Naive thymus-derived CD4-positive, alpha-beta T cell (primary cell): ENCODE measurements at regions of chr6 and their contacts with region 1.

Region 1: DNA sequence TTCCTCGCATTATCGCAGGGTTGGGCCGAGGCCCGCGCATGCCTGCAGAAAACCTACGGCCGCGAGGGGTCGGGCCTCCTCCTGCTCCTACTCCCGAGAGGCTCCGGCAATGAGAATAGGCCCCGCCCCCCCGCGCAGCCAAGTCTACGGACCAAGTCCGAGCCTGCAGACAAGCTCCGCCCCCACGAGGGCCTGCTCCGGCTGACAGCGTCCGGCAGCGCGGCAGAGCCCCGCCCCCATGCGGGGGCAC is 3.1 kb upstream of the GPSM3 start:
- DNase-seq: peak; percentile 94 to 100 (median 98)
- ATAC-seq: peak; percentile 89
- H3K4me3 ChIP-seq: peak overlapping the region; percentile 98
- H3K4me3 Mint-ChIP-seq: peak overlapping the region; percentile 92 to 99 (median 97)
- H3K27ac ChIP-seq: peak overlapping the region; percentile 97
- H3K27ac Mint-ChIP-seq: peak overlapping the region; percentile 86 to 99 (median 97)
- H3K4me1 ChIP-seq: peaks cover 20 to 29% of the 10 kb centered on the region in 2 donors
- H3K4me1 Mint-ChIP-seq: peaks cover 24 to 40% (median 31%) of the 10 kb centered on the region in 7 donors
- H3K27me3 ChIP-seq: no peaks in the 10 kb centered on the region
- H3K27me3 Mint-ChIP-seq: no peaks in the 10 kb centered on the region

Region 2: GRCh38 chr6:31493875-31494694 is 701.5 kb before region 1 on chr6:
- CTCF ChIA-PET with region 1: no interaction called
- POLR2A ChIA-PET with region 1: no interaction called
- intact Hi-C with region 1: loop called in 1 of 2 experiments (anchors 10 kb)
- DNase-seq: peak; percentile 33 to 78 (median 62)
- ATAC-seq: peak; percentile 65
- H3K4me3 ChIP-seq: peak overlapping the region; percentile 87
- H3K4me3 Mint-ChIP-seq: peak overlapping the region; percentile 78 to 93 (median 88)
- H3K27ac ChIP-seq: peak overlapping the region; percentile 81
- H3K27ac Mint-ChIP-seq: peak overlapping the region; percentile 36 to 98 (median 87)
- H3K4me1 ChIP-seq: peaks cover 17 to 24% of the 10 kb centered on the region in 2 donors
- H3K4me1 Mint-ChIP-seq: peaks cover 41 to 61% (median 50%) of the 10 kb centered on the region in 7 donors
- H3K27me3 ChIP-seq: no peaks in the 10 kb centered on the region
- H3K27me3 Mint-ChIP-seq: no peaks in the 10 kb centered on the region

Region 3: GRCh38 chr6:31513456-31514165 is 682.0 kb before region 1 on chr6:
- CTCF ChIA-PET with region 1: no interaction called
- POLR2A ChIA-PET with region 1: no interaction called
- intact Hi-C with region 1: no loop called
- DNase-seq: no peak
- ATAC-seq: no peak
- H3K4me3 ChIP-seq: no peak overlapping the region
- H3K4me3 Mint-ChIP-seq: no peak overlapping the region
- H3K27ac ChIP-seq: no peak overlapping the region
- H3K27ac Mint-ChIP-seq: no peak overlapping the region
- H3K4me1 ChIP-seq: no peaks in the 10 kb centered on the region
- H3K4me1 Mint-ChIP-seq: peaks cover 0 to 12% (median 0%) of the 10 kb centered on the region in 7 donors
- H3K27me3 ChIP-seq: no peaks in the 10 kb centered on the region
- H3K27me3 Mint-ChIP-seq: peaks cover 0 to 10% (median 0%) of the 10 kb centered on the region in 5 donors

Region 4: DNA sequence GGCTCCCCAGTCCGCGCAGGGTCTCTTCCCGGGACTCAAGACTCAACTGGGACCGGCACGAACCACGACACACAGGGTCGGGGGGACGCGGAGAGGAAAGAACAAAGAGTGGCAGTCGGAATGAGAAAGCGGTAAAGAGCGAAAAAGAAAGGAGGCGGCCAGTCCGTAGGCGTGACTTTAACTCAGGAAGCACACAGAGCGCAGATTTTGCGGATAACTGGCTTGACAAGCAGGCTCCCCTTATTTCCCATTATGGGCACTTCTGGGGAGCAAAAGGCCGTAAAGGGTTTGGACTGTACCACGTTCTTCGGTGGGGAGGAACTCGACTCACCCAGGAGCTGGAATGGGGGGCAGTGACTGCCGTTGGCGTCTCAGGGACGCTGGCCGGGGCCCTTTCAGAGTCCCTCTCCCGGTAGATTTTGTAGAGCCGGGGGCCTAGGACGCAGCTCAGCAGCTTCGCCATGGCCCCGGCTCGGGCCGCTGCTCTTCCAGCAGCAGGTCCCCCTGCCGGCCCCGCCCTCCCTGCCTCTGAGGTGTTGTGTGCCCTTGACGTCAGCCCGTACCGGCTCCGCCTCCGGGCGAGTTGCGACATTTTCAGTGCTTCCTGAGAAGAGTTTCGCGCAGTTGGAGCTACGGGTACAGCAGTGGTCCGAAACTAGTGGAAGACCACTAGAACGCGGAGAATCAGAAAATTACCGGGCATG is 492.6 kb before region 1 on chr6 and contains the start of gene ABHD16A:
- CTCF ChIA-PET with region 1: no interaction called
- POLR2A ChIA-PET with region 1: no interaction called
- intact Hi-C with region 1: no loop called
- DNase-seq: peak; percentile 93 to 97 (median 96)
- ATAC-seq: peak; percentile 95
- H3K4me3 ChIP-seq: peak within 1 kb of the TSS; percentile 98
- H3K4me3 Mint-ChIP-seq: peak within 1 kb of the TSS; percentile 92 to 100 (median 98)
- H3K27ac ChIP-seq: peak within 1 kb of the TSS; percentile 98
- H3K27ac Mint-ChIP-seq: peak within 1 kb of the TSS; percentile 95 to 98 (median 97)
- H3K4me1 ChIP-seq: peaks cover 21 to 28% of the 10 kb centered on the region in 2 donors
- H3K4me1 Mint-ChIP-seq: peaks cover 16 to 39% (median 31%) of the 10 kb centered on the region in 7 donors
- H3K27me3 ChIP-seq: no peaks in the 10 kb centered on the region
- H3K27me3 Mint-ChIP-seq: peaks cover 0 to 2% (median 0%) of the 10 kb centered on the region in 5 donors
- total RNA-seq, gene ABHD16A: 60.1 to 71.7 (median 65.2) TPM

Region 5: GRCh38 chr6:31901953-31902643 is 293.5 kb before region 1 on chr6 and contains the start of gene ZBTB12:
- CTCF ChIA-PET with region 1: no interaction called
- POLR2A ChIA-PET with region 1: interaction called, 3 read pairs
- intact Hi-C with region 1: loop called (anchors 1 to 5 kb)
- DNase-seq: peak; percentile 76 to 90 (median 84)
- ATAC-seq: peak; percentile 76
- H3K4me3 ChIP-seq: peak within 1 kb of the TSS; percentile 80
- H3K4me3 Mint-ChIP-seq: peak within 1 kb of the TSS; percentile 81 to 96 (median 88)
- H3K27ac ChIP-seq: peak within 1 kb of the TSS; percentile 83
- H3K27ac Mint-ChIP-seq: peak within 1 kb of the TSS; percentile 75 to 94 (median 86)
- H3K4me1 ChIP-seq: peaks cover 12 to 16% of the 10 kb centered on the region in 2 donors
- H3K4me1 Mint-ChIP-seq: peaks cover 18 to 34% (median 32%) of the 10 kb centered on the region in 7 donors
- H3K27me3 ChIP-seq: no peaks in the 10 kb centered on the region
- H3K27me3 Mint-ChIP-seq: peaks cover 0 to 11% (median 0%) of the 10 kb centered on the region in 5 donors
- total RNA-seq, gene ZBTB12: 0.77 to 4.5 (median 2.5) TPM

Region 6: DNA sequence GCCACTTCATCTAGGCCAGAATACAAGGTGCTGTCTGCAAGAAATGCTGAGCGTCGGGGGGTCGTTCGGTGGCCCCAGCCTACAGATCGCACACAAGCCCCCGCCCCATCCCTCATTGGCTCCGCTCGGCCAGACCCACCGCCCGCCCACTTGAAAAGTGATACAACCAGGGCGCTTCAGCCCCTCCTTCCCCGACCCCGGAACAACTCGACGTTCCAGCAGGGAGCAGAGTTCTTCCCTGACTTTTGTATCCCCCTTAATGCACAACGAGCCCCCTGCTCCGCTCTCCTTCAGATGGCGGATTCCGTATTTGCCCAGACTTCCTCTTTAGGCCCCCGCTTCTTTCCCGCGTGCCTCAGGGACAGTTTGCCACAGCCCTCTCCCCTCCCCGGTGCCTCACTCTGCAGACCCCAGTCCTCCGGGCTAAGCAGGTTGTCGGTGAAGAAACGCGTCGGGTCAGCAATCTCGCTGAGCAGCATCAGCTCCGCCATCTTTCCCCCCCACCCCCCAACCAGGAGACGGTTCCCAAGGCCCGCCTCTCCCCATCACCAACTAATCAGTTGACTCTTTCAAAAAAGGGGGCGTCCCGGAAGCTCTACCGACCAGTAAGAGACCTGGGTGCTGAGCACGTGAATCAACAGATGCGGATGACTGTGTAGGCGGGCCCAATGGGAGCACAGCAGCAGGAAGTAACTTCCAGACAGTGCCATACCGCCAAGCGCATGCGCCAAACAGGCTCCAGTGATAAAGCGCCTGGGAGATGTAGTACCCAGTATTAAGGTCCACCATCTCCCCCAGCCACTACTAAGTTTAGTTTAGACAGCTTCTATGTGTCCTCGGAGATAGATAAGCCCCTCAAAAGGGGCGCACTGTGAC is 67.6 kb before region 1 on chr6 and contains the start of gene ATF6B:
- CTCF ChIA-PET with region 1: interaction called, 8 read pairs
- POLR2A ChIA-PET with region 1: interaction called, 79 read pairs
- intact Hi-C with region 1: loop called (anchors 1 kb)
- DNase-seq: peak; percentile 80 to 100 (median 96)
- ATAC-seq: peak; percentile 97
- H3K4me3 ChIP-seq: peak within 1 kb of the TSS; percentile 96
- H3K4me3 Mint-ChIP-seq: peak within 1 kb of the TSS; percentile 96 to 100 (median 98)
- H3K27ac ChIP-seq: peak within 1 kb of the TSS; percentile 92
- H3K27ac Mint-ChIP-seq: peak within 1 kb of the TSS; percentile 83 to 98 (median 97)
- H3K4me1 ChIP-seq: peaks cover 33% of the 10 kb centered on the region in 2 donors
- H3K4me1 Mint-ChIP-seq: peaks cover 38 to 66% (median 53%) of the 10 kb centered on the region in 7 donors
- H3K27me3 ChIP-seq: no peaks in the 10 kb centered on the region
- H3K27me3 Mint-ChIP-seq: peaks cover 0 to 4% (median 0%) of the 10 kb centered on the region in 5 donors
- total RNA-seq, gene ATF6B: 115 to 168 (median 142) TPM

Region 7: DNA sequence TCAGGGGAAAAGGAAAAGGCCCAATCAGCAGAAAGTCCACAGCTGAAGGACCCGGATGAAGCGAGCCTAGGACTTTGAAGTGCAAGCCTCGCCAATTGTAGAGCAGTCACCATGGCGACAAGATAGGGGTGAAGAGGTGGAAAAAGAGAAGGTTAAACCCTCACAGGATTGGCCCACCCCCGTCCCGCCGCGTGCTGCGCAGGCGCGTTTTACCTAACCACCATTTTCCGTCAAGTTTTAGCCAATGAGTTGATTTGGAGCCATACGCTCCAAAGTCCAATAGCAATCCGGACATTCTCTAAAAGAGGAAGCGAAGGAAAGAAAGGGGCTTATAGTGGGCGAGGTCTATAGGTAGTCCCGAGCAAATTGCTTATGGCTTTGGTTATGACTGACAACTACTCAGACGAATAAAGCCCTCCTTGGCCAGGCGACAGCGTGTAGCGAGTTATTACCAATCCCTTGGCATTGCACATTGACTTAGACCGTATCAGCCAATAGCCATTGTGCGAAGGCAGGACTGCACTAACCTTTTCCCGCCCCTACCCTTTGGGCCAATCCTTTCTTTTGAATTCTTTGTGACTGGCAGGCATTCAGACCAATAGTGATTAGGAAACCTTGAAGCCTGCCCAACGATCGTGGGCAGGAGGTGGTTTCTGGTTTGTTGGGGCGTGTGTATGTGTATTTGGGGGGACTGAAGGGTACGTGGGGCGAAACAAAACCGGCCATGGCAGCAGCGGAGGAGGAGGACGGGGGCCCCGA is 17.6 kb before region 1 on chr6 and contains the start of gene RNF5:
- CTCF ChIA-PET with region 1: interaction called, 10 read pairs
- POLR2A ChIA-PET with region 1: interaction called, 259 read pairs
- intact Hi-C with region 1: loop called (anchors 1 kb)
- DNase-seq: peak; percentile 60 to 99 (median 97)
- ATAC-seq: peak; percentile 89
- H3K4me3 ChIP-seq: peak within 1 kb of the TSS; percentile 82
- H3K4me3 Mint-ChIP-seq: peak within 1 kb of the TSS; percentile 85 to 98 (median 95)
- H3K27ac ChIP-seq: peak within 1 kb of the TSS; percentile 91
- H3K27ac Mint-ChIP-seq: peak within 1 kb of the TSS; percentile 87 to 100 (median 95)
- H3K4me1 ChIP-seq: peaks cover 31 to 63% of the 10 kb centered on the region in 2 donors
- H3K4me1 Mint-ChIP-seq: peaks cover 63 to 86% (median 69%) of the 10 kb centered on the region in 7 donors
- H3K27me3 ChIP-seq: no peaks in the 10 kb centered on the region
- H3K27me3 Mint-ChIP-seq: no peaks in the 10 kb centered on the region
- total RNA-seq, gene RNF5: 17.0 to 50.6 (median 40.9) TPM

Region 8: DNA sequence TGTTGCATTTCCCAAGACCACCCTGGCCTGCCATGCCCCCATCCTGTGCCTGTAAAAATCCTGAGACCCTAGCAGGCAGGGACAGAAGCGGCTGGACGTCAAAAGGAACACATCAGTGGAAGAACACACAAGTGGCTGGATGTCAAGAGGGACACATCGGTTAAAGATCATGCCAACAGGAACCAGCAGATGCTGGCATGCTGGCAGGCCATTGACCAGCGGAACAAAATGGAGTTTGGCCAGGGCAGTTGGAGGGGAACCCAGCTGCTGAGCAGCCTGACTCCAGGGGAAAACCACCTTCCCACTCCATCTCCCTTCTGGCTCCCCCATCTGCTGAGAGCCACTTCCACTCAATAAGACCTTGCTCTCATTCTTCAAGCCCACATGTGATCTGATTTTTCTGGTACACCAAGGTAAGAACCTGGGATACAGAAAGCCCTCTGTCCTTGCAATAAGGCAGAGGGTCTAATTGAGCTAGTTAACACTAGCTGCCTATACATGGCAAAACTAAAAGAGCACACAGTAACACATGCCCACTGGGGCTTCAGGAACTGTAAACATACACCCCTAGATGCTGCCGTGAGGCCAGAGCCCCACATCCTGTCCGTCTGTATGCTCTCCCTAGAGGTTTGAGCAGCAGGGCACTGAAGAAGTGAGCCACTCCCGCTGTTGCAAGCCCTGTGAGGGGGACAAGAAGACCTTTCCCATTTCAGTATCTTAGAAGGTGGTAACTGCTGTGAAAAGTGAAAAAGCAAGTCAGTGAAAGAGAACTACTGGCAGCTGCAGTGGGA is 180.4 kb after region 1 on chr6:
- CTCF ChIA-PET with region 1: no interaction called
- POLR2A ChIA-PET with region 1: no interaction called
- intact Hi-C with region 1: no loop called
- DNase-seq: no peak
- ATAC-seq: no peak
- H3K4me3 ChIP-seq: no peak overlapping the region
- H3K4me3 Mint-ChIP-seq: no peak overlapping the region
- H3K27ac ChIP-seq: no peak overlapping the region
- H3K27ac Mint-ChIP-seq: no peak overlapping the region
- H3K4me1 ChIP-seq: no peaks in the 10 kb centered on the region
- H3K4me1 Mint-ChIP-seq: no peaks in the 10 kb centered on the region
- H3K27me3 ChIP-seq: peaks cover 0 to 3% of the 10 kb centered on the region in 2 donors
- H3K27me3 Mint-ChIP-seq: peaks cover 11 to 57% (median 19%) of the 10 kb centered on the region in 5 donors

Region 9: DNA sequence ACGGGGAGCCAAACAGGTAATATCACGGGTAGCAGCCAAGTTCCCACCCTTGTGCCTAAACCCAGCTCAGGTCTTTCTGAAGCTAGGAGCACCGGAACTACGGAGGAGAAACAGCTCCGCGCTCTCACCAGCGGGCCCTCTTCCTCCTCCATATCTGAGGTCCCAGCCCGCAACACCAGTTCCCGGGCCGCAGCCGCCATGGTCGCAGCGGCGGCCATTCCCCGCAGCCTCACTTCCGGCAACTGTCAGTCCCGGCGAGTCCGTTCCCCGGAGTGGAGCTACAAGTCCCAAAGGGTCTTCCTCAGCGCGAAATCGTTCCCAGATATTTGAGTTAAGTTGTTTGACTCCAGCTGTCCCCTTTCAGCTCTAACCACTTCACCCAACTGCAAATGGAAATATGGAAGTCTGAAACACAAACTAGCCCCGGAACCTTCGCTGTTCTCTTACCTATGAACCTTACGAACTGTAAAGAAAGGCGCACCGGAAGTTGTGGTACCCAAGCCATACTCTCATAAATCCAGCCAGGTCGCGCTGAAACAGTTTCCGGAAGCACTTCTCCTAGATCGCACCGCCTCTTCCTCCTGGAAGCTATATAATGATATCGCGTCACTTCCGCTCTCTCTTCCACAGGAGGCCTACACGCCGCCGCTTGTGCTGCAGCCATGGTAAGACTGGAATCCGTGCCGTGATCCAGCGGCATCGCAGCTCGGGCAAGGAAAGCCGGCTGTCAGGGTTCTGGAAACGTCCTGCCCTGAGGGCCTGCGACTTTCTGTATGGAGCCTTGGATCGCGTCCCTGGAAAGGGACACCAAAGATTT is 1076.1 kb after region 1 on chr6 and contains the starts of genes RPS18 and VPS52:
- CTCF ChIA-PET with region 1: no interaction called
- POLR2A ChIA-PET with region 1: no interaction called
- intact Hi-C with region 1: loop called in 1 of 2 experiments (anchors 10 kb)
- DNase-seq: peak; percentile 84 to 97 (median 93)
- ATAC-seq: peak; percentile 91
- H3K4me3 ChIP-seq: peak within 1 kb of the TSS; percentile 93
- H3K4me3 Mint-ChIP-seq: peak within 1 kb of the TSS; percentile 87 to 100 (median 98)
- H3K27ac ChIP-seq: peak within 1 kb of the TSS; percentile 91
- H3K27ac Mint-ChIP-seq: peak within 1 kb of the TSS; percentile 95 to 100 (median 99)
- H3K4me1 ChIP-seq: peaks cover 41 to 44% of the 10 kb centered on the region in 2 donors
- H3K4me1 Mint-ChIP-seq: peaks cover 34 to 81% (median 66%) of the 10 kb centered on the region in 7 donors
- H3K27me3 ChIP-seq: no peaks in the 10 kb centered on the region
- H3K27me3 Mint-ChIP-seq: peaks cover 0 to 3% (median 0%) of the 10 kb centered on the region in 5 donors
- total RNA-seq, gene RPS18: 2,454 to 4,896 (median 3,431) TPM
- total RNA-seq, gene VPS52: 74.3 to 110 (median 90.5) TPM